ENCODE measurements at regions of chr15 and their contacts with region 1.

Region 1: GRCh38 chr15:78437762-78438302 is at the start of gene IREB2:
- DNase-seq: peak; percentile 93 to 99 (median 97)

Region 2: DNA sequence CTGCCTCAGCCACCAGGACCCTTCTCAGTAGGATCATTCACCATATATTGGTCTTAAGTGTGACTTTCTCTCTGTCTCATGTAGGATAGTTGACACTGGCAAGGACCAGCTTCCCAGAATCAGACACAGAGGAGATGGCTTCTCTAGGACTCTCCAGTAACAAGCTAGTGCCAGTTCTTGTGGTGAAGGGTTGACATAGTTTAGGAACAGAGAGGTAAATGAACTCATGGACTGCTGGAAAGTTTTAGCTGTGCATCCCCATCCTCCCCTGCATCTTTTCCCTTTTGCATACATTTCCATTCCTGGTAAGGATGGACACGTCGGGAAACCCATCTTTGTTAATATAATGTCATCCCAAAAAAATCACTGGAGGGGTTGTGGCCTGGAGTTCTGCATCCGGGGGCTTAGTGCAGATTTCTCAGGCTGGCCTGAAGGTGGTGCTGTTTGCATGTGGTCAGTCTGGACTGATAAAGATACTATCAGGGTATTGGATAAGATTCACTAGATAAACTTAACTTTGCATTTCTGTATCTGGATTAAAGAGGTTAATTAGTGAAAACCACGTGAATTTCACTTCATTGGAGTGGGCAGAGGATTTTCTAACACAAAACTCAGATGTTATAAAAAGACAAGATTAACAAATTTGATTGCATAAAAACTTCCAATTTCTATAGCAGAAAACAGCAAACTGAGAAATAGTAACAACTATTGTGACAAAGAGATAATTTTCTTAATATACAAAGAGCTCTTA is 471.1 kb before region 1 on chr15:
- intact Hi-C with region 1: no loop called
- DNase-seq: peak; percentile 36 to 87 (median 68)

Region 3: DNA sequence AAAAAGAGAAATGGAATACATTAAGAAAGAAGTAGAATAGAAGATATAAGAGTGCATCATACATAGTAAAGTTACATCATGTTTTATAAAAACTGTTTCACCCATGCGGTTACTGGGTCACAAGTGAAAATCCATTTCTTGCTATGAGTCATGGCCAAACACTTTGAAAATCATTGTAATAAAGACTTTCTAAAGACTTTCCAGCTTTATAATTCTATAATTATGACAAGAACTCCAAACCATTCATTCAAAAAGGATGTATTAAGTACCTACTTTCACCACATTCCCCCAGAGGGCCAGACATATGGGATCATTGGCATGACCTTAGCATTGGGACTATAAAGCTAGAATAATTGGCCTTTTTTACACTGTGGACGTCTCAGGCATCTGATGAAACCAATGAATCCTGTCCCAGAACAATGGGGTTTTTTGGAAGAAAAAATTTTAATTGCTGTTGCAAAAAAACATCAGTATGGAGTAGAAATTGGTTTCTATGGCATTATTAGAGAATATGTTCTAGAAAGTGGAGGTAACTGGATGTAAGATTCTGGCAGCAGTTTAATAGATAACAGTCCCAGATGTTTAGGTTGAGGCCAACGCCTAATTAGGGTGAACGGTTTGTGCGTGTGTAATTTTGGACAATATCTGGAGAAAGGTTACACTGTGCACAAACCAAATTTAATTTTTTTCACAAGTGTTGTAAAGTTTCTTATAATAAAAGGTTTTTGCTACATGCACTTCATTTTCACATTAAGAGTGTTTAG is 135.1 kb before region 1 on chr15:
- intact Hi-C with region 1: loop called (anchors 5 kb)
- DNase-seq: no peak

Region 4: GRCh38 chr15:78536134-78536533 is 98.3 kb after region 1 on chr15:
- intact Hi-C with region 1: loop called (anchors 5 kb)
- DNase-seq: no peak

Measured in head of caudate nucleus (tissue), 42 donors.